Sigmoid colon (tissue), 7 donors: ENCODE measurements at regions of chr14 and their contacts with region 1.

Region 1: GRCh38 chr14:91060351-91061055 is at the start of gene RPS6KA5:
- DNase-seq: peak; percentile 100
- H3K4me3 ChIP-seq: peak within 1 kb of the TSS; percentile 75 to 96 (median 94)
- H3K27ac ChIP-seq: peak within 1 kb of the TSS; percentile 98 to 99 (median 98)
- H3K4me1 ChIP-seq: peaks cover 0 to 67% (median 41%) of the 10 kb centered on the region in 4 donors
- H3K27me3 ChIP-seq: no peaks in the 10 kb centered on the region
- CTCF ChIP-seq: peak in 2 of 4 experiments; percentile 27 to 30
- EP300 ChIP-seq: peak in 1 of 4 donors; percentile 29
- POLR2A ChIP-seq: peak; percentile 87 to 91
- total RNA-seq, gene RPS6KA5: 18.2 to 36.4 (median 25.9) TPM

Region 2: GRCh38 chr14:90924621-90925345 is 135.7 kb before region 1 on chr14:
- intact Hi-C with region 1: loop called (anchors 5 kb)
- DNase-seq: no peak
- H3K4me3 ChIP-seq: no peak overlapping the region
- H3K27ac ChIP-seq: peak overlapping the region in 1 of 4 donors; percentile 67
- H3K4me1 ChIP-seq: peaks cover 0 to 8% (median 6%) of the 10 kb centered on the region in 4 donors
- H3K27me3 ChIP-seq: no peaks in the 10 kb centered on the region
- CTCF ChIP-seq: no peak
- EP300 ChIP-seq: no peak
- POLR2A ChIP-seq: no peak

Region 3: GRCh38 chr14:90956273-90956672 is 104.2 kb before region 1 on chr14:
- intact Hi-C with region 1: no loop called
- DNase-seq: no peak
- H3K4me3 ChIP-seq: no peak overlapping the region
- H3K27ac ChIP-seq: no peak overlapping the region
- H3K4me1 ChIP-seq: no peaks in the 10 kb centered on the region
- H3K27me3 ChIP-seq: no peaks in the 10 kb centered on the region
- CTCF ChIP-seq: no peak
- EP300 ChIP-seq: no peak
- POLR2A ChIP-seq: no peak

Region 4: DNA sequence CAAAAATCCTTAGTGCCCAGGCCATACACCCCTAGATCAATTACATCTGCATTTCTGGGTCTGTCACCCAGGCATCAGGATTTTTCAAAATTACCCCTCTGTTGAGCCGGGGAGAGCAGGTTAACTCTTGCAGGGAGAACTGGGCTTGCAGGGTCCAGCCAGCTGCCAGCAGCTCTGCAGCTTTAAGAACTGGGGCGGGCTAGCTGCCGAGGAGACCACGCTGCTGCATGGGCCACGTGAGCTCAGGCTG is 53.3 kb after region 1 on chr14 and contains the start of gene DGLUCY:
- intact Hi-C with region 1: loop called (anchors 2 kb)
- DNase-seq: peak; percentile 94
- H3K4me3 ChIP-seq: peak within 1 kb of the TSS; percentile 54 to 66 (median 60)
- H3K27ac ChIP-seq: peak within 1 kb of the TSS; percentile 91 to 98 (median 94)
- H3K4me1 ChIP-seq: peaks cover 0 to 71% (median 62%) of the 10 kb centered on the region in 4 donors
- H3K27me3 ChIP-seq: no peaks in the 10 kb centered on the region
- CTCF ChIP-seq: no peak
- EP300 ChIP-seq: no peak
- POLR2A ChIP-seq: no peak
- total RNA-seq, gene DGLUCY: 44.4 to 99.4 (median 68.0) TPM

Region 5: GRCh38 chr14:91286530-91286937 is 226.0 kb after region 1 on chr14:
- intact Hi-C with region 1: loop called (anchors 10 kb)
- DNase-seq: peak; percentile 83
- H3K4me3 ChIP-seq: no peak overlapping the region
- H3K27ac ChIP-seq: no peak overlapping the region
- H3K4me1 ChIP-seq: peaks cover 0 to 31% (median 26%) of the 10 kb centered on the region in 4 donors
- H3K27me3 ChIP-seq: no peaks in the 10 kb centered on the region
- CTCF ChIP-seq: peak; percentile 81 to 95 (median 90)
- EP300 ChIP-seq: no peak
- POLR2A ChIP-seq: no peak